ENCODE measurements at regions of chr11 and their contacts with region 1.

Region 1: DNA sequence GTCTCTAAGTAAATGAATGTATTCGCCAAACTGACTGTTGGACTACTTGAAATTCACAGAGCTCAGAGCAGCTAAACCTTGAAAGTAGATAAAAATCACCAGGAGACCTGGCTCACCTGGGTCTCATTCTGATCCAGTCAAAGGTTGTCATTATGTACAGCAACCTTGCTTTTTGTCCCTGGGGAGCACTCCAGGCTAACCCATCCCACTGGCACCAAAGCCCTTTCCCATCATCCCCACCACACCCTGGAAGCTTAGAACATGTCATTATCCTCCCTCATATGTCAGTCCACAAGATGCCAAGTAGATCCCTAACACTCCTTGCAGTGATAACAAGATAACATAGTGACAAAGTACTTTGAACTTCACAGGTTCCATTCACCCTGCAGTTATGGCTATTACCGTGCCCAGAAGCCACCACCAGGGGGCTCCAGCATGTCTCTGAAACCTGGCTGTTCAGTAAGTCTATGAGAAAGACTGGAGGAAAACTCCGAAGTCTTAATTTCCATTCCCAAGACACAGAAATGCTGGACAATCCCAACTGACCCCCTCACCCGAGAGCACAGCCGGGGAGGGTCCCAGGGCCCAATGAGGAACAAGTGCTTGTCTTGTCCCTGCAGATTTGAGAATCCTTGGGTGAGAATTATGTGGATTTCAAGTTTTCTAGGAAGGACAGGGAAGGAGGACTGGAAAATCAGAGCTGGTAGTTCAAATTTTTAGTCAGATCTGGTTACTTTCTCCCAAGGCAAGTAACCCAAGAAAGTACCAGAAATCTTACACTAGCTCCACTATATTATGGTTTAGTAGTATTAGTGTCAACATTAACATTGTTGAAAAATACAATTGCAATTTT is 43.0 kb upstream of the USP47 start:
- DNase-seq: peak; percentile 60
- CTCF ChIP-seq: peak; percentile 83

Region 2: DNA sequence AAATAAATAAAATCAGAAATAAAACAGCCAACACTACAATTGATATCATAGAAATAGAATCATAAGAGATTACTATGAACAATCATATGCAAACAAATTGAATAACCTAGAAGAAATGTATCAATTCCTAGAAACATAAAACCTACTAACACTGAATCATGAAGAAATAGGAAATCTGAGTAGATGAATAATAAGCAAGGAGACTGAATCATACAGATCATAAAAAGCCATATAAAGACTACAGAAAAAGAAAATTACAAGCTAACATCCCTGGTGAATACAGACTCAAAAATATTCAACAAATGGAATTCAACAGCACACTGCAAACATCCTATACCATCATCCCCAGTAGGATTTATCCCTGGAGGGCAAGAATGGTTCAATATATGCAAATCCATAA is 1640.4 kb before region 1 on chr11:
- in situ Hi-C with region 1: no loop called
- DNase-seq: no peak
- CTCF ChIP-seq: no peak

Region 3: GRCh38 chr11:12281571-12282478 is 483.0 kb after region 1 on chr11:
- in situ Hi-C with region 1: loop called (anchors 10 kb)
- DNase-seq: peak; percentile 82
- CTCF ChIP-seq: peak; percentile 96